WTC11 (cell line): ENCODE measurements at regions of chr4 and their contacts with region 1.

Region 1: DNA sequence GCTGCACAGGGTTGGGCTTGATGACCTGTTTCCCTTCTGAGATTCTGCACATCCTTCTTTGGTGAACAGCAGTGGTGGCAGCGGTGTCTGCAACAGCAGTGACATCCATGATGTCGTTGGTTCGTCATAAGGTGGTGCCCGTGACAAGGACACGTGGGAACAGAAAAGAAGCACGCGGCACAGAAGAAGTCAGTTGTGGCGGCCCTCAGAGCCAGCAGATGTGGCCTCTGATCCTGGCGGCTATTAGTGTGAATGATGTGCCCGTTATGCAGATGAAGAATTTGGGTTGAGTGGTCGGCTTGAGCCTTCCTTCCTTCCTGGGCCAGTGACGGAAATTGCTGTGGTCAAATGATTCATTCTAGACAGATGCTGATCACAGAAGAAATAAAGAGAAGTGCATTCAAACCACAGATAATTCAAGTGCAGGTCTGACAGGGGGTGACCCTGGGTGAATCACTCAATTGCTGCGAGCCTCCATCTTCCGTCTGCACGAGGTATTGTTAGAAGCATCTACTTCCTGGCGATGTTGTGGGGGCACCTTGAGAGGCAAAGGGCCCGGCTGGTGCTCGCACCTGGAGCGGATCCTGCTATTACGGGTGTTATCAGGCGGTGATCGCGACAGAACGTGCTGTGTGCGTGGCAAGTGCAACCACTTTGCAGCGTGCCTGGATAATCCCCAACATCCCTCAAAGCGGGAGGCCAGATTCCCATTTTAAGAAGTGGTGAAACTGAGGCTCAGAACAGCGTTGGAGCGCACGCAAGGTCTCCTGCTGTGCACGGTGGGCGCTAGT is 215.2 kb upstream of the PSAPL1 start:
- DNase-seq: no peak
- ATAC-seq: no peak
- H3K4me3 Mint-ChIP-seq: no peak overlapping the region
- H3K27ac Mint-ChIP-seq: no peak overlapping the region
- H3K4me1 Mint-ChIP-seq: peaks cover 17% of the 10 kb centered on the region
- H3K27me3 Mint-ChIP-seq: no peaks in the 10 kb centered on the region
- CTCF ChIP-seq: no peak

Region 2: DNA sequence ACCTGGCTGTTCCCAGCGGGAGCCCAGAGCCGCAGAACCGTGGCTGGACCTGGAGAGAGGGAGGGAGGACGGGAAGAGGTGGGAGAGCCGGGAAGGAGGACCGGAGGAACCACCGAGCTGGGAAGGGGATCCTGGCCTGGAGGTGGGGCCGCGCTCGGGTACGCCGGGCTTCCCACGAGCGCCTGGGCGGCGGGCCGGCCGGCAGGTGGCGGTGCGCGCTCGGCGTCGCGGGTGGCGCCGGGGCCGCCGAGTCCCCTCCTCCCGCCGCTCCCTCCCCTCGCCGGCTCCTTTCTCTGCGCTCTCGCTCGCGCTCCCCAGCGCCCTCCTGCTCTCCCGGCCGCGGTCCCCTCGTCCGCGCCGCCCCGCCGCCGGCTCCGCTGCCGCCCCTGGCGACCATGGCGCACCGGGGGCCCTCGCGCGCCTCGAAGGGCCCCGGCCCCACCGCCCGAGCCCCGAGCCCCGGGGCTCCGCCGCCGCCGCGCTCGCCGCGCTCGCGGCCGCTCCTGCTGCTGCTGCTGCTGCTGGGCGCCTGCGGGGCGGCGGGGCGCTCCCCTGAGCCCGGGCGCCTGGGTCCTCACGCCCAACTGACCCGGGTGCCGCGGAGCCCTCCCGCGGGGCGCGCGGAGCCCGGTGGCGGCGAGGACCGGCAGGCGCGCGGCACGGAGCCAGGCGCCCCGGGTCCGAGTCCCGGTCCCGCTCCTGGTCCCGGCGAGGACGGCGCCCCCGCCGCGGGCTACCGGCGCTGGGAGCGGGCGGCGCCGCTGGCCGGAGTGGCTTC is 457.5 kb before region 1 on chr4 and contains the start of gene SORCS2:
- CTCF ChIA-PET with region 1: interaction called, 10 read pairs
- POLR2A ChIA-PET with region 1: no interaction called
- DNase-seq: peak; percentile 72
- ATAC-seq: peak; percentile 70
- H3K4me3 Mint-ChIP-seq: peak within 1 kb of the TSS; percentile 73
- H3K27ac Mint-ChIP-seq: no peak within 1 kb of the TSS
- H3K4me1 Mint-ChIP-seq: peaks cover 27% of the 10 kb centered on the region
- H3K27me3 Mint-ChIP-seq: peaks cover 50% of the 10 kb centered on the region
- CTCF ChIP-seq: peak; percentile 36; the same call in 1 of the 2 replicates
- total RNA-seq, gene SORCS2: 5.5 to 9.1 TPM (median 6.6 TPM) in 3 replicates

Region 3: DNA sequence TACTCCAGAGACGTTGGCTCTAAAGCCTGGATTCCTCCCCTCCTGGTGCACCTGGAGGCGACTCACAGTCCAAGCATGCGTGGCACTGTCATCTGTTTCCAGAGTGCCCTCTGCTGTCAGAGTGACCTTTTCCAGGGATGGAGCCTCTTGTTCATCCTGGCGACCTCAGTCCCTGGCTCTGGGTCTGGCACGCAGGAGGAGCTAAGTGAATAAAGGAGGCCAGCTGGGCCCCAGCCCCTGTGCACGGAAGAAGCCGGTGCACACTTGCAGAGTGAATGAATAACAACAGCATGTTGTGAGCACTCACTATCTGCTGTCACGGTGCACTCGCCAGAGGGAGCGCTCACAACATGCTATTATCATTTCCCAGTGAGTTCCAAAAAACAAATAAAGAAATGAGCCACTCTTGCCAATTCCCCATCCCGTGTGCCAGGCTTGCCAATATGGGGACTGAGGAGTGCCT is 187.4 kb before region 1 on chr4:
- CTCF ChIA-PET with region 1: interaction called, 14 read pairs
- POLR2A ChIA-PET with region 1: no interaction called
- DNase-seq: no peak
- ATAC-seq: peak; percentile 46
- H3K4me3 Mint-ChIP-seq: no peak overlapping the region
- H3K27ac Mint-ChIP-seq: no peak overlapping the region
- H3K4me1 Mint-ChIP-seq: peaks cover 25% of the 10 kb centered on the region
- H3K27me3 Mint-ChIP-seq: no peaks in the 10 kb centered on the region; the same call in 1 of the 2 replicates
- CTCF ChIP-seq: no peak

Region 4: GRCh38 chr4:7518871-7519637 is 130.9 kb before region 1 on chr4:
- CTCF ChIA-PET with region 1: interaction called, 11 read pairs
- POLR2A ChIA-PET with region 1: no interaction called
- DNase-seq: no peak
- ATAC-seq: no peak
- H3K4me3 Mint-ChIP-seq: no peak overlapping the region
- H3K27ac Mint-ChIP-seq: no peak overlapping the region
- H3K4me1 Mint-ChIP-seq: peaks cover 9% of the 10 kb centered on the region
- H3K27me3 Mint-ChIP-seq: no peaks in the 10 kb centered on the region
- CTCF ChIP-seq: no peak

Region 5: DNA sequence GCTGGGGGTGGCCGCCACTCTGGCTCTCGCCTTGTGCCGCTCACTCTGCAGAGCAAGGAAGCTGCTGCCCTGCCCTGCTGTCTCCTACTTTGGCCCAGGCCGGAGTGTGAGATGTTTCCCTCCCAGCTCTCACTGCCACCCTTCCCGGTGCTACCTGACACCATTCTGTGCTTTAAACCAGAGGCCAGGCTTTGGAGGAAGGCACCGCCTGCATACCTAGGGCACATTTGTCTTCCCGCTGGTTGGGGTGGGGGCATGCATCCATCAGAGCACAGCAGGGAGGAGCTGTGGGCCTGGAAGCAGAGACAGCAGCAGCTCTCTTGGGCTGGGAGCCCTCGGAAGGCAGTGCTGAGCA is 118.3 kb before region 1 on chr4:
- CTCF ChIA-PET with region 1: interaction called, 13 read pairs
- POLR2A ChIA-PET with region 1: no interaction called
- DNase-seq: peak; percentile 36
- ATAC-seq: peak; percentile 59
- H3K4me3 Mint-ChIP-seq: no peak overlapping the region
- H3K27ac Mint-ChIP-seq: no peak overlapping the region
- H3K4me1 Mint-ChIP-seq: peaks cover 50% of the 10 kb centered on the region
- H3K27me3 Mint-ChIP-seq: no peaks in the 10 kb centered on the region; the same call in 1 of the 2 replicates
- CTCF ChIP-seq: no peak

Region 6: GRCh38 chr4:7595934-7596461 is 53.9 kb before region 1 on chr4:
- CTCF ChIA-PET with region 1: interaction called, 11 read pairs
- POLR2A ChIA-PET with region 1: no interaction called
- DNase-seq: no peak
- ATAC-seq: no peak
- H3K4me3 Mint-ChIP-seq: no peak overlapping the region
- H3K27ac Mint-ChIP-seq: no peak overlapping the region
- H3K4me1 Mint-ChIP-seq: peaks cover 26% of the 10 kb centered on the region
- H3K27me3 Mint-ChIP-seq: no peaks in the 10 kb centered on the region
- CTCF ChIP-seq: no peak

Region 7: GRCh38 chr4:7660176-7661039 is 10.5 kb after region 1 on chr4:
- CTCF ChIA-PET with region 1: interaction called, 22 read pairs
- POLR2A ChIA-PET with region 1: no interaction called
- DNase-seq: no peak
- ATAC-seq: peak; percentile 39; the same call in 1 of the 2 replicates
- H3K4me3 Mint-ChIP-seq: no peak overlapping the region
- H3K27ac Mint-ChIP-seq: no peak overlapping the region
- H3K4me1 Mint-ChIP-seq: peaks cover 15% of the 10 kb centered on the region
- H3K27me3 Mint-ChIP-seq: no peaks in the 10 kb centered on the region; the same call in 1 of the 2 replicates
- CTCF ChIP-seq: no peak

Region 8: GRCh38 chr4:7710576-7711306 is 60.8 kb after region 1 on chr4:
- CTCF ChIA-PET with region 1: no interaction called
- POLR2A ChIA-PET with region 1: no interaction called
- DNase-seq: no peak
- ATAC-seq: no peak
- H3K4me3 Mint-ChIP-seq: no peak overlapping the region
- H3K27ac Mint-ChIP-seq: no peak overlapping the region
- H3K4me1 Mint-ChIP-seq: no peaks in the 10 kb centered on the region
- H3K27me3 Mint-ChIP-seq: no peaks in the 10 kb centered on the region
- CTCF ChIP-seq: no peak